ENCODE measurements at regions of chr2 and their contacts with region 1.

Region 1: DNA sequence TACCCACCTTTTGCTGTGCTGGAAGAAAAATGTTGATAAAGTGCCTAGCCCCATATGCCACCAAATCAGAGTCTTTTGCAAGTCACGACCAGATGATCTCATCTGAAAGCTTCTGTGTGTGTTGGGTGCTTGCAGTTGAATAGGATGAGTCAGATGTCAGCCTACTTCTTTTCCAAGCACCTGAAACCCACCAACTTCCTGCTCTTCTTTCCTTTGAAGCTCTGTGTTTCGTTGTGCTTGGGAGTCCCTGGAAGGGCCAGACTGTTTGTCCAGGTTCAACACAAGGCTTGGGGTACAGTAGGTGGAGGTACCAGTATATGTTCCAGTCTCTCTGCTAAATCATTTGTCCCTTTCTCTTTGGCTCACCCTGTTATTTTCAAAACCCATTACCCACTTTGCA is 36.8 kb upstream of the LCLAT1 start:
- DNase-seq: no peak
- ATAC-seq: no peak
- H3K4me3 ChIP-seq: no peak overlapping the region
- H3K27ac ChIP-seq: peak overlapping the region; percentile 7 to 55
- H3K4me1 ChIP-seq: peaks cover 7 to 13% of the 10 kb centered on the region in 2 donors
- H3K27me3 ChIP-seq: no peaks in the 10 kb centered on the region

Region 2: GRCh38 chr2:29940706-29941105 is 469.5 kb before region 1 on chr2:
- intact Hi-C with region 1: no loop called
- DNase-seq: no peak
- ATAC-seq: peak; percentile 73
- H3K4me3 ChIP-seq: no peak overlapping the region
- H3K27ac ChIP-seq: no peak overlapping the region
- H3K4me1 ChIP-seq: no peaks in the 10 kb centered on the region
- H3K27me3 ChIP-seq: no peaks in the 10 kb centered on the region

Region 3: DNA sequence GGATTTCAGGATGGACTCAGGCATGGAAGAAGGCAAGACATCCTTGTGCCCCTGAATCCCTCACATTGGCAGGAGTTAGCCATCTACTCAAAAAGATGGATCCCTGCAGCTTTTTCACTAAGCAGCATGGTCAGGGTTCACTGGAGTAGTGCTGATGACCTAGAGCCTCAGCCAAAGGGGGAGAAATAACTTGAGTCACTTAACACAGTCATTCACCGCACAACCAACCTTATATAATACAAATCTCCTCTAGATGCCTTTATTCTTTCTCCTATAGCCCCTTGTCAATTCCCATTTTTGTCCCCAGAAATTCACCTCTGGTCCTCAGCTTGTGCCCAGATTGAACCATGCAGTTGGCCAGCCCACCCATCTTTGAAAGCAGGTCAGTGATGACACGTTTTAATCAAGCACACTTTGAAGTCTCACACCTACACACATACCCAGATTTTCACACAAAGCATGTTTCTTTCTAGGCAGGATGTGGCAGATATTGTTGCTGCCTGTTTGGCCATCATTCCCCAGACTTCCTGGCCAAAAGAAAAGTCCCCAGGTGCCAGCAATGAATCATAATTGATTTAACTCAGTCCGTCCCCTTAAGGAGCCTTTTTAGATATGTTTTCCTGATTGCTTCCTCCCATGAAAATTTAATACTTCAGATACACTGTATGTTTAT is 94.7 kb before region 1 on chr2:
- intact Hi-C with region 1: loop called in 1 of 2 experiments (anchors 5 kb)
- DNase-seq: no peak
- ATAC-seq: no peak
- H3K4me3 ChIP-seq: no peak overlapping the region
- H3K27ac ChIP-seq: no peak overlapping the region
- H3K4me1 ChIP-seq: no peaks in the 10 kb centered on the region
- H3K27me3 ChIP-seq: no peaks in the 10 kb centered on the region

Region 4: GRCh38 chr2:30373881-30374302 is 36.3 kb before region 1 on chr2:
- intact Hi-C with region 1: loop called (anchors 5 kb)
- DNase-seq: no peak
- ATAC-seq: no peak
- H3K4me3 ChIP-seq: no peak overlapping the region
- H3K27ac ChIP-seq: peak overlapping the region in 1 of 2 donors; percentile 8
- H3K4me1 ChIP-seq: no peaks in the 10 kb centered on the region
- H3K27me3 ChIP-seq: no peaks in the 10 kb centered on the region

Region 5: DNA sequence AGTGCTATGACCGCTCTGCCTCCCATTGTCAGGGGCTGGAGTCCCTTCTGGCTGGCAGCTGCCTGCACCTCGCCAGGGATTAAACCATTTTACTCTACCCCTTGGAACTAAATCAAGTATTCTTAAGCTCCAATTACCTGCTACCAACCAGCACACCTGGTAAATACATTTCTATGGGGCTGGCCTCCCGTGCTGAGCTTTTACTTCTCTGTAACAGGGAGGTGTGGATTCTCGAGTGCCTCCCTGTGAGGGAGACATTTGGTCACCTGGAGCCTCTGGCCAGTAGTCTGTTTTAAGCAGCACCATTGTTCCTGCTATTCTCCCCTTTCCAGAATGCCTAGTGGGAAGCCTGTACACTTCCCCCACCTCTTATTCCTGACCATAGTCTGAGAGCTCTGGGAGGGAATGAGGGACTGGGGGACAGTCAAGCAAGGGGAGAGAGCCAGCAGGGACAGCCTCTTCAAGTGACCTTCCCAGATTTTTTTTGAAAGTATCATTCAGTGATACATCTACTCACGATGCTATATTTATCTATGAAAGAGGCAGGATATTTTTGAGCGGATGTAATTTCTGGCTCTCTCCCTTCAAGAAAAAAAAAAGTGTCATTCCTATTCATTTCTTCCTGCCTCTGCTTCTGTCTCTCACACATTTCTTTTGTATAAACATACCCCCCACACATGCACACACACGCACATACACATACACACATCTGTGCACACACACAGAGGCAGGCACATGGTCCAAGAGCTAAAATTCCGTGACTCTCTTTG is 284.3 kb after region 1 on chr2:
- intact Hi-C with region 1: no loop called
- DNase-seq: no peak
- ATAC-seq: peak; percentile 5
- H3K4me3 ChIP-seq: no peak overlapping the region
- H3K27ac ChIP-seq: peak overlapping the region; percentile 53 to 88
- H3K4me1 ChIP-seq: peaks cover 0 to 5% of the 10 kb centered on the region in 2 donors
- H3K27me3 ChIP-seq: no peaks in the 10 kb centered on the region

Region 6: DNA sequence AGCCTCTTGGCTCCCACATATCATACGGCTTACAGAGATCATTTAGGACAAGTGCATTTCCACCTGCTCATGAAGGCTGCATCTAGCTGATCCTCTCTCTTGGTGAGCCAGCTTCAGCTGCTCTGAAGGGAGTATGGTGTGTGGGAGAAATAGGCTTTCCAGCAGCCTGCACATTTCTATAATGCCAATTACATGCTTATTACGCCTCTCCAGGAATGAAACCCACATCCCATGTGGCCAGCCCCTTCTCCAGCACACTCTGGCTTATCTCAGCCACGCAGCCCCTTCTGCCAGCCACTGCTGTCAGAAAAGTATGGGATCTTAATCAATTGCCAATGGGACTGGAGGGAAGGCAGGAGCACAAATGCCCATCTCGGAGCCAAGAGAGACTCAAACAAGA is 610.5 kb after region 1 on chr2:
- intact Hi-C with region 1: no loop called
- DNase-seq: no peak
- ATAC-seq: no peak
- H3K4me3 ChIP-seq: no peak overlapping the region
- H3K27ac ChIP-seq: no peak overlapping the region
- H3K4me1 ChIP-seq: no peaks in the 10 kb centered on the region
- H3K27me3 ChIP-seq: no peaks in the 10 kb centered on the region

Measured in aorta (tissue), 5 donors.